Naive thymus-derived CD4-positive, alpha-beta T cell (primary cell): ENCODE measurements at regions of chr2 and their contacts with region 1.

Region 1: GRCh38 chr2:157404363-157404762 is 39.5 kb downstream of the CYTIP start:
- DNase-seq: peak in 8 of 9 donors; percentile 44 to 92 (median 88)
- ATAC-seq: peak; percentile 98
- H3K4me3 ChIP-seq: peak overlapping the region; percentile 7
- H3K4me3 Mint-ChIP-seq: peak overlapping the region; percentile 8 to 83 (median 74)
- H3K27ac ChIP-seq: peak overlapping the region; percentile 75
- H3K27ac Mint-ChIP-seq: peak overlapping the region; percentile 91 to 100 (median 99)
- H3K4me1 ChIP-seq: peaks cover 33 to 55% of the 10 kb centered on the region in 2 donors
- H3K4me1 Mint-ChIP-seq: peaks cover 31 to 82% (median 77%) of the 10 kb centered on the region in 7 donors
- H3K27me3 ChIP-seq: no peaks in the 10 kb centered on the region
- H3K27me3 Mint-ChIP-seq: no peaks in the 10 kb centered on the region

Region 2: DNA sequence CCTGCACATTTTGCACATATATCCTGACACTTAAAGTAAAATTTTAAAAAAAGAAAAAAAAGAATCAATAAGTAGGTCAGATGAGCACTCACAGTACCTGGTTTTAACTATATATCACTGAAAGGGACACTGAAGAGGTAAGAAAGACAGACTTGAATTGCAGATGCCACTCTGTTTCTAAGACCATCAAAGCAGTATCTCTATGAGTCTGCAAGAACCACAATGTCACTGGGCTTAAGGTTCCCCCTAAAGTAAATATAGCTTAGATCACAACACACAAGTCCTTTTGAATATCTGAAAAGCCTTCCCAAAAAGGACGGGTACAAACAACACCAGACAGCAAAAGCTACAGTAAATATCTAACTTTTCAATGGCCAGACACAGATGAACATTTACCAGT is 18.1 kb before region 1 on chr2:
- CTCF ChIA-PET with region 1: no interaction called
- POLR2A ChIA-PET with region 1: interaction called, 7 read pairs
- intact Hi-C with region 1: loop called in 1 of 2 experiments (anchors 2 kb)
- DNase-seq: no peak
- ATAC-seq: peak; percentile 34
- H3K4me3 ChIP-seq: no peak overlapping the region
- H3K4me3 Mint-ChIP-seq: peak overlapping the region in 4 of 10 donors; percentile 0 to 41 (median 20)
- H3K27ac ChIP-seq: no peak overlapping the region
- H3K27ac Mint-ChIP-seq: peak overlapping the region in 8 of 9 donors; percentile 44 to 87 (median 72)
- H3K4me1 ChIP-seq: peaks cover 3 to 21% of the 10 kb centered on the region in 2 donors
- H3K4me1 Mint-ChIP-seq: peaks cover 9 to 73% (median 68%) of the 10 kb centered on the region in 7 donors
- H3K27me3 ChIP-seq: no peaks in the 10 kb centered on the region
- H3K27me3 Mint-ChIP-seq: no peaks in the 10 kb centered on the region

Region 3: GRCh38 chr2:157420771-157421323 is 16.5 kb after region 1 on chr2:
- CTCF ChIA-PET with region 1: interaction called, 7 read pairs
- POLR2A ChIA-PET with region 1: interaction called, 810 read pairs
- intact Hi-C with region 1: loop called (anchors 1 to 2 kb)
- DNase-seq: no peak
- ATAC-seq: peak; percentile 74
- H3K4me3 ChIP-seq: no peak overlapping the region
- H3K4me3 Mint-ChIP-seq: peak overlapping the region in 9 of 10 donors; percentile 30 to 75 (median 66)
- H3K27ac ChIP-seq: peak overlapping the region; percentile 86
- H3K27ac Mint-ChIP-seq: peak overlapping the region; percentile 90 to 98 (median 94)
- H3K4me1 ChIP-seq: peaks cover 59% of the 10 kb centered on the region in 2 donors
- H3K4me1 Mint-ChIP-seq: peaks cover 49 to 91% (median 80%) of the 10 kb centered on the region in 7 donors
- H3K27me3 ChIP-seq: no peaks in the 10 kb centered on the region
- H3K27me3 Mint-ChIP-seq: no peaks in the 10 kb centered on the region